ENCODE measurements at regions of chr4 and their contacts with region 1.

Region 1: DNA sequence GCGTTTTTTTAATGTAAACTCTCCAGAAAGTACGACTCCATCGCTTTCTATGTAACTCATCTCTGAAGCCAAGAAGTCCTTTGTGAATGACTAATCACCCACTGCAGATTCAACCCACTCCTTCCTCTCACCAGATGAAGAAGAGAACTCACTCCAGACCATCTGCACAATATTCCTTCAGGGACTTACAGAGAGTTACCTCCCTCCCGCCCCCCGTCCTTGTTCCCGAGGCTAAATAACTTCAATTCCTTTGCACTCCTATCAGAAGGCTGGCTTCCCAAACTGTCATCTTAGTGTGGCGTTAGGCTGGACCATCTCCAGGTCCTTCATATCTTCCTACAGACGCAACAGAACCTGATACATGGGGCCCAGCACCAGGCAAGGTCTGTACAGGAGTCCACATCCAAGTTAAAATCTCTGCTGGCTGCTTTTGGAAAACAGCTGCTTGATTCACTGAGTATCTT is 82.4 kb downstream of the AFAP1 start:
- DNase-seq: no peak
- H3K4me3 ChIP-seq: no peak overlapping the region
- H3K4me3 Mint-ChIP-seq: peak overlapping the region in 7 of 8 donors; percentile 1 to 78 (median 47)
- H3K27ac ChIP-seq: no peak overlapping the region
- H3K27ac Mint-ChIP-seq: peak overlapping the region; percentile 80 to 98 (median 96)
- H3K4me1 ChIP-seq: peaks cover 61% of the 10 kb centered on the region
- H3K4me1 Mint-ChIP-seq: peaks cover 41 to 73% (median 62%) of the 10 kb centered on the region in 4 donors
- H3K27me3 ChIP-seq: no peaks in the 10 kb centered on the region
- H3K27me3 Mint-ChIP-seq: no peaks in the 10 kb centered on the region

Region 2: GRCh38 chr4:7827991-7828720 is 29.1 kb before region 1 on chr4:
- CTCF ChIA-PET with region 1: interaction called, 6 read pairs
- POLR2A ChIA-PET with region 1: interaction called, 23 read pairs
- intact Hi-C with region 1: loop called (anchors 1 kb)
- DNase-seq: peak; percentile 47 to 90 (median 57)
- H3K4me3 ChIP-seq: peak overlapping the region in 1 of 2 donors; percentile 29
- H3K4me3 Mint-ChIP-seq: peak overlapping the region; percentile 5 to 86 (median 77)
- H3K27ac ChIP-seq: peak overlapping the region; percentile 55
- H3K27ac Mint-ChIP-seq: peak overlapping the region; percentile 88 to 97 (median 89)
- H3K4me1 ChIP-seq: peaks cover 53% of the 10 kb centered on the region
- H3K4me1 Mint-ChIP-seq: peaks cover 54 to 71% (median 61%) of the 10 kb centered on the region in 4 donors
- H3K27me3 ChIP-seq: no peaks in the 10 kb centered on the region
- H3K27me3 Mint-ChIP-seq: no peaks in the 10 kb centered on the region

Region 3: DNA sequence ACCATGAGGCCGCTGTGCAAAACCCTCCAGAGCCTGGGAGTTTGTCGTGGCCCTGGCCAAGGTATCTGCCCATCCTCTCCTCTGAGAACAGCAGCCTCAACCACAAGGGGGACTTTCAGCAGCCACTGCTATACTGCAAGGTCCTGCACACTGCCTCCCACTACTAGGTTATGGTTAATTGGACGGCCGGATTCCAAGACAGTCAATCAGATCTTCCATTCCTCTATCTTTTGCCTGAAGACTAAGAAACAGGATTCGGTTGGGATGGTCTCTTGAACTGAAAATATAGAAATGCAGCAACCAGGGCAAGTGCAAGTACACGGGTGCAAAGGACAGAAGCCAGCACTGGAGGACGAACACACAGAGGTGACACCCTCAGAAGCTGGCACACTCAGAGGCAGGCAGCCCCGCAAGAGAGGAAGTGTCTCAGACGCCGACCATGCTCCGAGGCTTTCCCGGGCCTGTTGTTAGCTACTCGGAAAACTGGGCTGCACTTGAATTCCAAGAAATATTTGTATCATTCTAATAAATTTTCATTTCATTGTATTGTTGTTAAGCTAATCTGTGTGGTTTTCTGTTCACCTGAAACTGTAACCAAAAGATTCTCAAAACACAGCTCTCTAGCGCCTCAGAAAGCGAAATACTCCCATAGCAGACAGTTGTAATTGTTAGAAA is 19.1 kb after region 1 on chr4:
- CTCF ChIA-PET with region 1: interaction called, 5 read pairs
- POLR2A ChIA-PET with region 1: interaction called, 9 read pairs
- intact Hi-C with region 1: loop called (anchors 1 kb)
- DNase-seq: peak; percentile 30 to 45 (median 36)
- H3K4me3 ChIP-seq: peak overlapping the region in 1 of 2 donors; percentile 33
- H3K4me3 Mint-ChIP-seq: peak overlapping the region; percentile 61 to 94 (median 82)
- H3K27ac ChIP-seq: peak overlapping the region; percentile 44
- H3K27ac Mint-ChIP-seq: peak overlapping the region; percentile 67 to 96 (median 91)
- H3K4me1 ChIP-seq: peaks cover 42% of the 10 kb centered on the region
- H3K4me1 Mint-ChIP-seq: peaks cover 38 to 67% (median 58%) of the 10 kb centered on the region in 4 donors
- H3K27me3 ChIP-seq: no peaks in the 10 kb centered on the region
- H3K27me3 Mint-ChIP-seq: no peaks in the 10 kb centered on the region

Region 4: GRCh38 chr4:7964890-7965662 is 107.8 kb after region 1 on chr4:
- CTCF ChIA-PET with region 1: interaction called, 3 read pairs
- POLR2A ChIA-PET with region 1: interaction called, 5 read pairs
- intact Hi-C with region 1: loop called (anchors 1 kb)
- DNase-seq: peak; percentile 41 to 90 (median 60)
- H3K4me3 ChIP-seq: no peak overlapping the region
- H3K4me3 Mint-ChIP-seq: peak overlapping the region; percentile 46 to 86 (median 65)
- H3K27ac ChIP-seq: peak overlapping the region; percentile 66
- H3K27ac Mint-ChIP-seq: peak overlapping the region; percentile 88 to 97 (median 93)
- H3K4me1 ChIP-seq: peaks cover 60% of the 10 kb centered on the region
- H3K4me1 Mint-ChIP-seq: peaks cover 30 to 72% (median 52%) of the 10 kb centered on the region in 4 donors
- H3K27me3 ChIP-seq: no peaks in the 10 kb centered on the region
- H3K27me3 Mint-ChIP-seq: no peaks in the 10 kb centered on the region

Region 5: GRCh38 chr4:7987148-7987989 is 130.1 kb after region 1 on chr4:
- CTCF ChIA-PET with region 1: no interaction called
- POLR2A ChIA-PET with region 1: no interaction called
- intact Hi-C with region 1: loop called (anchors 5 kb)
- DNase-seq: peak; percentile 67 to 71 (median 69)
- H3K4me3 ChIP-seq: no peak overlapping the region
- H3K4me3 Mint-ChIP-seq: no peak overlapping the region
- H3K27ac ChIP-seq: no peak overlapping the region
- H3K27ac Mint-ChIP-seq: no peak overlapping the region
- H3K4me1 ChIP-seq: peaks cover 5% of the 10 kb centered on the region
- H3K4me1 Mint-ChIP-seq: peaks cover 2 to 4% (median 4%) of the 10 kb centered on the region in 4 donors
- H3K27me3 ChIP-seq: no peaks in the 10 kb centered on the region
- H3K27me3 Mint-ChIP-seq: no peaks in the 10 kb centered on the region

Region 6: DNA sequence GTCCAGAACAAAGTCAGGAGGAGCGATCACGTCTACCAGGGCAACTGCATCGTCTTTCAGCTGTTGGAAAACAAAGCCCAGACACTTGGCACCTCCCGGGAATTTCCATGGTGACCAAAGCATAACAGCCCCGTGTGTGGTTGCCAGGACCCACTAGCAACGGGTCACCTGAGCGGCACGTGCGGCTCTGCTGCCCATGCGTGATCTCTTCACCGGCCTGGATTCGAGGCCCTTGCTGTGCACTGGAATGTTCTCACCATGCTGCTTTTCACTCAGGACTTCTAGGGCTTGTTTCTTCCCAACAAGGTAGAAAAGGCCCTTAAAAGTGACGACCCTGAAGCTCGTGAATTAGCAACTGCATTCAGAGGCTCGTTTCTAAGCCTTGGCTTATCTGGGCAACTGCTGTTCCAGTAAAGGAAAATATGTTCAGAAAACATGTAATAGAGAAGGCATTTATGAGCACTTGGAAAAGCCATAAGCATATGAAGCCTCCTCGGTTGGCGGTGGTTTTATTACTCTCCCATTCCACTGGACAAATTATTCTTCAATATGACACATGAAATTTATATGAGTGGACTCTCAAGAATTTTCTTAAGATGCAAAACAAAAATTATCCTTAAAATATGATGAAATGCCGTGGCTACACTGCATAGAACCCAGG is 513.8 kb after region 1 on chr4:
- CTCF ChIA-PET with region 1: no interaction called
- POLR2A ChIA-PET with region 1: no interaction called
- intact Hi-C with region 1: no loop called
- DNase-seq: no peak
- H3K4me3 ChIP-seq: no peak overlapping the region
- H3K4me3 Mint-ChIP-seq: no peak overlapping the region
- H3K27ac ChIP-seq: no peak overlapping the region
- H3K27ac Mint-ChIP-seq: no peak overlapping the region
- H3K4me1 ChIP-seq: no peaks in the 10 kb centered on the region
- H3K4me1 Mint-ChIP-seq: peaks cover 0 to 2% (median 0%) of the 10 kb centered on the region in 4 donors
- H3K27me3 ChIP-seq: no peaks in the 10 kb centered on the region
- H3K27me3 Mint-ChIP-seq: no peaks in the 10 kb centered on the region